WTC11 (cell line): ENCODE measurements at regions of chr10 and their contacts with region 1.

Region 1: GRCh38 chr10:103244663-103245271 is 920 bp upstream of the RPEL1 start:
- DNase-seq: peak; percentile 82
- ATAC-seq: peak; percentile 88
- H3K4me3 Mint-ChIP-seq: no peak overlapping the region
- H3K27ac Mint-ChIP-seq: no peak overlapping the region
- H3K4me1 Mint-ChIP-seq: peaks cover 19% of the 10 kb centered on the region
- H3K27me3 Mint-ChIP-seq: no peaks in the 10 kb centered on the region; the same call in 1 of the 2 replicates
- CTCF ChIP-seq: peak; percentile 85

Region 2: GRCh38 chr10:102917962-102918816 is 326.6 kb before region 1 on chr10 and contains the start of gene CNNM2:
- CTCF ChIA-PET with region 1: interaction called, 50 read pairs
- POLR2A ChIA-PET with region 1: interaction called, 4 read pairs
- DNase-seq: peak; percentile 100
- ATAC-seq: peak; percentile 90
- H3K4me3 Mint-ChIP-seq: peak within 1 kb of the TSS; percentile 86
- H3K27ac Mint-ChIP-seq: peak within 1 kb of the TSS; percentile 88
- H3K4me1 Mint-ChIP-seq: peaks cover 43% of the 10 kb centered on the region
- H3K27me3 Mint-ChIP-seq: peaks cover 18% of the 10 kb centered on the region
- CTCF ChIP-seq: no peak
- total RNA-seq, gene CNNM2: 23.5 to 28.0 TPM (median 27.0 TPM) in 3 replicates

Region 3: DNA sequence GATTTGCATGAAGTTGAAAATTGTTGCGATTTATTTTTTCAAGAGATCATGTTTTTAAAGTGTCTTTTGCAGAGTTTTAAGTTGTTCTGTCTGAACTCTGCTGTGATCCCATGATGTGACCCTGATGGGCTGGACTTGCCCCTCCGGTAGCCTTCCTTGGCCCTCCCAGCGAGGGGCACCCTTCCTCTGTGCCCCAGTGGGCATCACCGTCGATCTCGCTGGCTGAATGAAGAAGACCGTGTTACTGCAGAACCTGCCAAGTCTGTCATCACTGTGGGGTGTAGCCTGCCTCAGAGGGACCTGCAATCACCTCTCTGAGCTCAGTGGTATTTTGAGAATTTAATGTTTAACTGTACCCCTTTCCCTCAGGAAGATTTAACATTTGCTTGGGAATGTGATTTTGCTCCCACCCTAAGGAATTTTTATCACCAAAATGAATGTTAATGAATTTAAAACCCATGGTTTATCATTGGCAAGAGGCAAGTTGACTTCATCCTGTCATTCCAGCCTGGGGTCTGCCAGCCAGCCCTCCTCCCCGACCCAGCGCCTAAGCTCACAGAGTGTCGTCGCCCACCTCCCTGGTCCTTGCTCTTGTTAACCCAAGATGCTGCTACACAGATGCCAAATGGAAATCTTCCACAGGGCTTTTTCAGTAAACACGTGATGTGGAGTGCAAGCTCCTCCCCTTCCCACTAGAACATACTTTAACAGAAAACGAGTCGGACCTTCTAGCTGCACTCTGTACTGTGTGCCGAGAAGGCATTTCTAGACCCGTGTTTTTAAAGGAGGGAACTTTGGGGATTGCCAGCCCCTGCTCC is 167.1 kb before region 1 on chr10:
- CTCF ChIA-PET with region 1: interaction called, 25 read pairs
- POLR2A ChIA-PET with region 1: no interaction called
- DNase-seq: no peak
- ATAC-seq: no peak
- H3K4me3 Mint-ChIP-seq: no peak overlapping the region
- H3K27ac Mint-ChIP-seq: peak overlapping the region; percentile 71; the same call in 1 of the 2 replicates
- H3K4me1 Mint-ChIP-seq: peaks cover 4% of the 10 kb centered on the region; the same call in 1 of the 2 replicates
- H3K27me3 Mint-ChIP-seq: no peaks in the 10 kb centered on the region
- CTCF ChIP-seq: no peak

Region 4: GRCh38 chr10:103102195-103102594 is 142.6 kb before region 1 on chr10:
- CTCF ChIA-PET with region 1: interaction called, 22 read pairs
- POLR2A ChIA-PET with region 1: no interaction called
- DNase-seq: no peak
- ATAC-seq: no peak
- H3K4me3 Mint-ChIP-seq: no peak overlapping the region
- H3K27ac Mint-ChIP-seq: peak overlapping the region; percentile 41; the same call in 1 of the 2 replicates
- H3K4me1 Mint-ChIP-seq: peaks cover 14% of the 10 kb centered on the region
- H3K27me3 Mint-ChIP-seq: no peaks in the 10 kb centered on the region
- CTCF ChIP-seq: no peak

Region 5: GRCh38 chr10:103153302-103154197 is 91.2 kb before region 1 on chr10:
- CTCF ChIA-PET with region 1: interaction called, 21 read pairs
- POLR2A ChIA-PET with region 1: interaction called, 4 read pairs
- DNase-seq: no peak
- ATAC-seq: peak; percentile 74
- H3K4me3 Mint-ChIP-seq: peak overlapping the region; percentile 31; the same call in 1 of the 2 replicates
- H3K27ac Mint-ChIP-seq: peak overlapping the region; percentile 99
- H3K4me1 Mint-ChIP-seq: peaks cover 28% of the 10 kb centered on the region
- H3K27me3 Mint-ChIP-seq: no peaks in the 10 kb centered on the region
- CTCF ChIP-seq: no peak

Region 6: DNA sequence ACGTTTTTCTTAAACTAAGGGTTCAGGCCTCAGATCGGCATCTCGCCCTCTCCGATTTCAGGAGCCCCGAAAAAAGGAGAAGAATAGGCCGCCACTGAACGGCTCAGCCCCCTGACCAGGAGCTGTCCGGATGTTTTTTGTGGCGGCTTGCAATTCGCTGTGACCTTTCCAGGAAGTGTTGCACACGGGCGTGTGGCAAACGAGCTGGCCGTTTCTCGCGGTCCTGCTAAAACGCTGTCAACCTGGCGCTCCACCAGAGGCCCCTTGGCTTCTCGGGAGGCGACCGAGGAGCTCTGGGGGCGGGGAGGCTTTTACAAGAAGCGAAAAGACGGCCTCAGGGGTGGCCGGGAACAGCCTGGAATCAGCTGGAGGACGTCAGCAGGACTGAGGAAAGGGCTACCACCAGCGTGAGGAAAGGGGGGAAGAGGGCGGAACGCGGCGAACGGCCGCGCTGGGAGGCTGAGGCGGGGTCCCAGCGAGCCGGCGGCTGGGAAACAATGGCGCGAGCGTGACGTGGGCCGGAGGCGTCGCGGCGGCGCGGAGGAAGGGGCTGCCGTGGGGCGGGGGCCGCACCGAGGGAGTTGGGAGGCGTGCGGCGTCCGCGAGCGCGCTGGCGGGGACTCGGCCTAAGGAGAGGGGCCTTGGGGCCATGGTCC is 52.2 kb before region 1 on chr10:
- CTCF ChIA-PET with region 1: interaction called, 25 read pairs
- POLR2A ChIA-PET with region 1: interaction called, 3 read pairs
- DNase-seq: peak; percentile 68
- ATAC-seq: peak; percentile 58
- H3K4me3 Mint-ChIP-seq: peak overlapping the region; percentile 85
- H3K27ac Mint-ChIP-seq: peak overlapping the region; percentile 95
- H3K4me1 Mint-ChIP-seq: peaks cover 48% of the 10 kb centered on the region
- H3K27me3 Mint-ChIP-seq: peaks cover 13% of the 10 kb centered on the region
- CTCF ChIP-seq: no peak

Region 7: DNA sequence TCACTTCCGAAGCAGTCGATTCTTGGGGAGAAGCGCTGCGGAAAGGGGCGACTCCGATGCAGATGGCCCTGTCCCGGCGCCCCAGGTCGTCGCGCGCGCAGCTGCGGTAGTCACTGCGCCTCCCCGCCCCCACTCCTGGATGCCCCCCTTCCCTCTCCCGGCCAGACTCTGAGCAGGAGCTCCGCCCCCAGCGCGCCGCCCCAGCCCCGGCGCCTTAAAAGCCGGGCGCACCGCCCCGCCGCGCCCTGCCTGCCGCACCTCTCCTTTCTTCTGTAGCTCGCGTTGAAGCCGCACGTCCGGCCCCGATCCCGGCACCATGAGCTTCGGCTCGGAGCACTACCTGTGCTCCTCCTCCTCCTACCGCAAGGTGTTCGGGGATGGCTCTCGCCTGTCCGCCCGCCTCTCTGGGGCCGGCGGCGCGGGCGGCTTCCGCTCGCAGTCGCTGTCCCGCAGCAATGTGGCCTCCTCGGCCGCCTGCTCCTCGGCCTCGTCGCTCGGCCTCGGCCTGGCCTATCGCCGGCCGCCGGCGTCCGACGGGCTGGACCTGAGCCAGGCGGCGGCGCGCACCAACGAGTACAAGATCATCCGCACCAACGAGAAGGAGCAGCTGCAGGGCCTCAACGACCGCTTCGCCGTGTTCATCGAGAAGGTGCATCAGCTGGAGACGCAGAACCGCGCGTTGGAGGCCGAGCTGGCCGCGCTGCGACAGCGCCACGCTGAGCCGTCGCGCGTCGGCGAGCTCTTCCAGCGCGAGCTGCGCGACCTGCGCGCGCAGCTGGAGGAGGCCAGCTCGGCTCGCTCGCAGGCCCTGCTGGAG is 32.3 kb after region 1 on chr10 and contains the start of gene INA:
- CTCF ChIA-PET with region 1: interaction called, 19 read pairs
- POLR2A ChIA-PET with region 1: no interaction called
- DNase-seq: peak; percentile 82
- ATAC-seq: peak; percentile 52
- H3K4me3 Mint-ChIP-seq: peak within 1 kb of the TSS; percentile 71
- H3K27ac Mint-ChIP-seq: no peak within 1 kb of the TSS
- H3K4me1 Mint-ChIP-seq: peaks cover 34% of the 10 kb centered on the region
- H3K27me3 Mint-ChIP-seq: peaks cover 76% of the 10 kb centered on the region
- CTCF ChIP-seq: no peak
- total RNA-seq, gene INA: 16.6 to 20.3 TPM (median 17.3 TPM) in 3 replicates

Region 8: DNA sequence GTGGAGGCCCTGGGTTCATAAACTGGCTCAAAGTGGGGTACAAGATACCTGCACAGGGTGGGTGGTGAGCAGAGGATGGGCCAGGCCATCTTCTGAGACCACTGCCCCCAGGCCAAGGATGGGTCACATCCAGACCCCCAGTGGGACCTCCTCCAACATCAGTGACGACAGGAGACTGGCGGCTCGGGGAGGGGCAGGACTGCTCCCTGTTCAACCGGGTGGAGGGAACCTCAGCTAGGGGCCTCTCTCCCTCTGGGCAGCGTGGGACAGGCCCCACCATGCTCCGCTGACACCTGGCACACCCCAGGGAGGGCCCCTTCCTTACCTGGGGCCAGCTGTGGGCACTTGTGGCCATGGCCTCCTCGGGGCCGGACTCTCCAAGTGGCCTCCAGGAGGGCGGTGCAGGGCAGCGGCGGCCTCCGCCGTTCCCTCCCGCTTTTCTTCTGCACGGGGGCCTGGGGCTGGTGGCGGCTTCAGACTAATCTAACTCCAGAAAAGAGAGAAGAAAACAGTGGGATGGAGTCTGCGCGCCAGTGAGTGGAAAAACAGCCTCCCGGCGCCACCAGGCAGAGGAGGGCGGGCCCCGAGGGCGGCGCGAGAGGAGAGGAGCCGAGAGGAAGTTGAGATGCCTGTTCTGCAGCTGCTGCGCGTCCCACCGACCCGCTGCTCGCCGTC is 207.2 kb after region 1 on chr10 and contains the start of gene CALHM2:
- CTCF ChIA-PET with region 1: no interaction called
- POLR2A ChIA-PET with region 1: no interaction called
- DNase-seq: peak; percentile 60
- ATAC-seq: peak; percentile 71
- H3K4me3 Mint-ChIP-seq: peak within 1 kb of the TSS; percentile 68
- H3K27ac Mint-ChIP-seq: no peak within 1 kb of the TSS
- H3K4me1 Mint-ChIP-seq: peaks cover 7% of the 10 kb centered on the region; the same call in 1 of the 2 replicates
- H3K27me3 Mint-ChIP-seq: no peaks in the 10 kb centered on the region
- CTCF ChIP-seq: no peak
- total RNA-seq, gene CALHM2: 1.8 to 2.4 TPM (median 1.9 TPM) in 3 replicates

Region 9: GRCh38 chr10:103636492-103636891 is 391.7 kb after region 1 on chr10:
- CTCF ChIA-PET with region 1: no interaction called
- POLR2A ChIA-PET with region 1: no interaction called
- DNase-seq: peak; percentile 62
- ATAC-seq: peak; percentile 63
- H3K4me3 Mint-ChIP-seq: peak overlapping the region; percentile 24; the same call in 1 of the 2 replicates
- H3K27ac Mint-ChIP-seq: peak overlapping the region; percentile 97
- H3K4me1 Mint-ChIP-seq: peaks cover 51% of the 10 kb centered on the region
- H3K27me3 Mint-ChIP-seq: no peaks in the 10 kb centered on the region
- CTCF ChIP-seq: no peak

Region 10: DNA sequence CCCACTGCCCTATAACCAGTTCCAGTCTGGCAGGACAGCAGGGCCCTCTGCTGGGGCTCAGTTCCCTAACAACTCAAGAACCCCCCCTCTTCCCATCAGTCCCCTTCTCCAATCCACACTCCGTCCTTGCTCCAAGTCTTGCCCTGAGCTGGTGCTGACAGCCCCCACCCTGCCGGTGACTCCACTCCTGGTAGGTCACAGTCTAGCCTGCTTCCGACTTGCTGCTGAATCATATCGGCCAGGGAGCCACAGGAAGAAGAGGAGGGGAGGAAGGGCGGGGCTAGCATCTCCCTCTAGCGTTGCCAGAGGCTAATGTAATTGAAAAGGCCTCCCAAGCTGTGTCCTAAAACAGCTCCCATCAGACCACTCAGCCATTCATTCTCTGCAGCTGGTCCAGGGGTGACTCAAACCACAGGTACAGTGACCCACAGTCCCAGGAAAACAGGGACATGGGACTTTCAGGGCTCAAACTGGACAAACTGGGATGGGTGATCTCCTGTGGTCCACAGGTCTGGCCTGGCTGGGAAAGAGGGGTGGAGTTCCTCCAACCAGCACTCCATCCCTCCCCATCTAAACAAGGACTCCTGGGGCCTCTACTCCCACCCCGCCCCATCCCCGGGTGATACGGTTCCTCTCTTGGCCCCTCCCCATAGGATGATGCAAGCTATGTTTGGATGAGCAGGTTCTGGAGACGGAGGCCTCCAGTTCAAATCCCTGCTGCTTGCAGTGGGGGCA is 451.8 kb after region 1 on chr10:
- CTCF ChIA-PET with region 1: no interaction called
- POLR2A ChIA-PET with region 1: no interaction called
- DNase-seq: peak; percentile 55
- ATAC-seq: peak; percentile 53
- H3K4me3 Mint-ChIP-seq: no peak overlapping the region
- H3K27ac Mint-ChIP-seq: no peak overlapping the region; the same call in 1 of the 2 replicates
- H3K4me1 Mint-ChIP-seq: peaks cover 28% of the 10 kb centered on the region
- H3K27me3 Mint-ChIP-seq: peaks cover 32% of the 10 kb centered on the region
- CTCF ChIP-seq: no peak